ENCODE measurements at regions of chr12 and their contacts with region 1.

Region 1: GRCh38 chr12:111396726-111397445 is 8.8 kb upstream of the SH2B3 start:
- DNase-seq: peak; percentile 94
- ATAC-seq: peak; percentile 82

Region 2: GRCh38 chr12:111451649-111452129 is 54.8 kb after region 1 on chr12:
- intact Hi-C with region 1: loop called (anchors 1 kb)
- DNase-seq: no peak
- ATAC-seq: peak; percentile 5

Region 3: DNA sequence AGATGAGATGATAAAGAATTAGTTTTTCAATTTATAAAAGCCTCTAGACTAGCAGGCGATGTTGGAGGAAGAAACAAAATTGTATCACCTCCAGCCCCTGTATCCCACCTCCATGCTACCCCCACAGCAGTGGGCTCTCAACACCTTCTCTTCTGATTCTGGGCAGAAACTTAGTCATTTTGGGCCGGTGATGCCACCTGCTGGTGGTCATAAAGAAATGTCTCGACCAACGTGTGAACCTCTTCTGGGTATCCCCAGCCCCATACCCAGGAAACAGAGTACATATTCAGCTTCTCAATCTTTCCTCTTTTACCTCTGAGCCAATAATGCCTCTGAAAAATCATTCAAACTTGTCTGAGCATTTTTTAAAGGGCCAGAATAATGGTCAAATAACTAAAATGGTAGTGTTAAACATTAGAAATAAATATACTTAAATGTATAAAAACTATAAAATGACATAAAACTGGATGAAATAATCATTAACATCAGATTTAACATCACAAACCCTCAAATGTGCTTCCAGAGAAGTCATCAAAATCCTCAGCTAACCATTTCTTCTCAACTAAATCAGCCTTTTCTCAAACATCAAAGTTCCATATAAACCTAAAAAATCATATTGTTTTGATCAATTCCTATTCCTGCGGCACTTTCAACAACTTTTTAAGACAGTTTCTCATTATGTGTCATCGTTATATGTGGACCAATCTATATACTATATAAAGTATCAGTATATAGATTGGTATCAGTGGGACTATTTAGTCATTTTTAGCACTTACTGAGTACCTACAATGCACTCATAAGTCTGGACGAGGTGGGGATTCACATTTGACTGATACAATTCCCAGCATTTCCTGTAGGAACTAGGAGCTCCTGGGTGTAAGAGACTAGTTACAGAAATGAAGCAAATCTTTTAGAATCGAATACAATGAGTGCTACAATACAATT is 132.8 kb after region 1 on chr12:
- intact Hi-C with region 1: loop called (anchors 2 kb)
- DNase-seq: no peak
- ATAC-seq: peak; percentile 64

Region 4: GRCh38 chr12:111685744-111686517 is 289.0 kb after region 1 on chr12 and contains the starts of genes ACAD10 and BRAP:
- intact Hi-C with region 1: loop called (anchors 10 kb)
- DNase-seq: peak; percentile 98
- ATAC-seq: peak; percentile 98
- total RNA-seq, gene ACAD10: 27.8 TPM
- total RNA-seq, gene BRAP: 14.1 TPM